AG04449 (cell line): ENCODE measurements at regions of chr17 and their contacts with region 1.

Region 1: DNA sequence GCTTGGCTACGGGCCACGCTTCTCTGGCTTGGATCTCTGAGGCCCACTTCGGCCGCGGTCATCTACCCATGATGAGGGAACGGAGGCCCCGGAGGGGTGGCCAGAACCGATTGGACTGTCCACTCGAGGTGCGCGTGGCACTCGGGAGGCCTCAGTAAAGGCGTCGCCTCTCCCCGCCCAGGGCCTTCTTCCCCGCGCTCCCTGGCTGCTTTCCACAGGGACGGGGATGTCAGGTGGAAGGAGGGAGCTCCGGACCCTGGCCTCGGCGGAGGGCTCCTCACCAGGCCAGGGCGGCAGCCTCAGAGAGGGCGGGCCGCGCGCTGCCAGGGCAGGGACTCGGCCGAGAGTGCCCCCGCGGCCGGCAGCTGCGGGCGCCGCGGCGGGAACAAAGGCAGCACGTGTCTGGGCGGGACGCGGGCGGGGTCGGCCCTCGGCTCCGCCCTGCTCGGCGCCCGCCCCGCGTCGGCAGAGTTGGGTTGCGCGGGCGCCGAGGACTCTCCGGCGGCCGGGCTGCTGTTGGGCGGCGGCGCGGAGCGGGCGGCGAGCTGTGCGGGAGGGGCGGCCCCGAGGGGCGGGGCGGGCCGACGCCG is 587 bp upstream of the CDK5R1 start:
- DNase-seq: no peak
- H3K4me3 ChIP-seq: peak overlapping the region; percentile 62
- CTCF ChIP-seq: no peak

Region 2: DNA sequence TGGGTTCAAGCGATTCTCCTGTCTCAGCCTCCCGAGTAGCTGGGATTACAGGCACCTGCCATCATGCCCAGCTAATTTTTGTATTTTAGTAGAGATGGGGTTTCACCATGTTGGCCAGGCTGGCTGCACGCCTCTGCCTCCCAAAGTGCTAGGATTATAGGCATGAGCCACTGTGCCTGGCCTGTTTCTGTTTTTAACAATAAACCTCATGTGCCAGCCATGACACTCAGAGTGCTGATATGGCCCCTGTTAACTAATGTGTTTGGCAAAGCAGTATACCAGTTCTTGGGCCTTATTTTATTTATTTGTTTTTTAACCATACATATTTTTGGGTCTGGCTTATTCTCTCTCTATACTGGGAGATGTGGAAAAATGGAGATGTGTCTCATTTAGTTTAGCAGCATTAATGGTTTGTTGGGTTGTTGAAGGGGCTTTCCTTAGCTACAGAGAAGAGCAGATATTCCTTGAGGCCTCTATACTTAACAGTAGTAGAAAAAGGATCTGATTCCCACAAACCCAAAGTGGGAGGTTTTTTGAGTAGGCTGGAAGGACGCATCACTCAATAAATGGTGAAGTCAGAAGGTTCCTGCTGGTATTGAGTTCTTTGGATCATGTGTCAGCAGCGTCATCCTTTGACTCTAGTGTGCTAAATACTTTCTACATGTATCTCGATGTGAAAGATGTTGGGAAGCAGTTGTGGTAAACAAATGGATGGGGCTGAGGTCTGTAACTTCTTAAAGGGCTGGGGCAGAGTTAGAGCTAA is 15.6 kb before region 1 on chr17:
- CTCF ChIA-PET with region 1: interaction called, 117 read pairs
- POLR2A ChIA-PET with region 1: interaction called, 4 read pairs
- DNase-seq: no peak
- H3K4me3 ChIP-seq: no peak overlapping the region
- CTCF ChIP-seq: no peak

Region 3: DNA sequence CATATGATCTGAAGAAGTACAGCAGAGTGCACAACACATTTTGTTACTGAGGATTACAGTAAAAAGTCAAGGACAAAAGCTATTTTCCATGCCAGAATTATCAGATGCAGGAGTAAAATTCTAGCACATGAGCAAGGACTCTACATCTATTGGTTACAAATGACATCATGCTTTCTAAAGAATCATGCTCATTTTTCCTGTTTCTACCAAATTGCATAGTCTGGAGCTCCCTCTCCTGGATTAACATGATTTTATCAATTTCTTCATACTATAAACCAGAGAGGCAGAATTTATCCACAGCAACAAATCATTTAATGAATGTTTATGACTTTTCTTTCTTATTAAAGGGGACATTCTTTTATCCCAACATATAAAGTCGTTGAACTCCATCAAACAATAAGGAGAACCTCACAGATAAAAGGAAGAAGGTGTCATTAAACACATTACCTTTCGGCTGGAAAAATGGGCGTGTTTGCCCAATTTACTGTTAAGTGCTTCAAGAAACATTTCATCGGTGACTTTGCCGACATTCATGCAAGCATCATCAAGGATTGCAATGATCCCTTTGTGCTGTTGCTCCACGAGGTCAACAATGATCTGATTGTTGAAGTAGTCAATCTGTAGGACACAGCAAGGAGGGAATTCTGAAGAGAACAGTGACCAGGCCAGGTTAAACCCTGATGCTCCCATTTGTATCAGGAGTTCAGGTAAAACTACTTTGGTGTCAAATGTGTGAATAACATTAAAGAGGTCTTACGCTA is 269.0 kb after region 1 on chr17:
- CTCF ChIA-PET with region 1: interaction called, 70 read pairs
- POLR2A ChIA-PET with region 1: no interaction called
- DNase-seq: peak; percentile 41
- H3K4me3 ChIP-seq: no peak overlapping the region
- CTCF ChIP-seq: peak; percentile 33